Naive thymus-derived CD4-positive, alpha-beta T cell (primary cell): ENCODE measurements at regions of chr16 and their contacts with region 1.

Region 1: GRCh38 chr16:66751303-66751991 is at the start of gene DYNC1LI2:
- DNase-seq: peak; percentile 76 to 95 (median 88)
- ATAC-seq: peak; percentile 98
- H3K4me3 ChIP-seq: peak within 1 kb of the TSS; percentile 78
- H3K4me3 Mint-ChIP-seq: peak within 1 kb of the TSS; percentile 76 to 95 (median 90)
- H3K27ac ChIP-seq: peak within 1 kb of the TSS; percentile 91
- H3K27ac Mint-ChIP-seq: peak within 1 kb of the TSS; percentile 73 to 96 (median 88)
- H3K4me1 ChIP-seq: peaks cover 21 to 24% of the 10 kb centered on the region in 2 donors
- H3K4me1 Mint-ChIP-seq: peaks cover 30 to 45% (median 42%) of the 10 kb centered on the region in 7 donors
- H3K27me3 ChIP-seq: no peaks in the 10 kb centered on the region
- H3K27me3 Mint-ChIP-seq: peaks cover 0 to 35% (median 0%) of the 10 kb centered on the region in 5 donors
- total RNA-seq, gene DYNC1LI2: 72.3 to 85.7 (median 80.9) TPM

Region 2: GRCh38 chr16:66507731-66508239 is 243.7 kb before region 1 on chr16:
- CTCF ChIA-PET with region 1: no interaction called
- POLR2A ChIA-PET with region 1: no interaction called
- intact Hi-C with region 1: no loop called
- DNase-seq: no peak
- ATAC-seq: no peak
- H3K4me3 ChIP-seq: no peak overlapping the region
- H3K4me3 Mint-ChIP-seq: no peak overlapping the region
- H3K27ac ChIP-seq: no peak overlapping the region
- H3K27ac Mint-ChIP-seq: peak overlapping the region in 1 of 9 donors; percentile 72
- H3K4me1 ChIP-seq: no peaks in the 10 kb centered on the region
- H3K4me1 Mint-ChIP-seq: peaks cover 5 to 15% (median 8%) of the 10 kb centered on the region in 7 donors
- H3K27me3 ChIP-seq: no peaks in the 10 kb centered on the region
- H3K27me3 Mint-ChIP-seq: no peaks in the 10 kb centered on the region

Region 3: GRCh38 chr16:66562407-66562806 is 189.0 kb before region 1 on chr16:
- CTCF ChIA-PET with region 1: no interaction called
- POLR2A ChIA-PET with region 1: no interaction called
- intact Hi-C with region 1: loop called in 1 of 2 experiments (anchors 5 kb)
- DNase-seq: peak in 4 of 9 donors; percentile 21 to 53 (median 34)
- ATAC-seq: peak; percentile 60
- H3K4me3 ChIP-seq: no peak overlapping the region
- H3K4me3 Mint-ChIP-seq: no peak overlapping the region
- H3K27ac ChIP-seq: no peak overlapping the region
- H3K27ac Mint-ChIP-seq: peak overlapping the region in 5 of 9 donors; percentile 14 to 71 (median 26)
- H3K4me1 ChIP-seq: peaks cover 22 to 46% of the 10 kb centered on the region in 2 donors
- H3K4me1 Mint-ChIP-seq: peaks cover 31 to 67% (median 41%) of the 10 kb centered on the region in 7 donors
- H3K27me3 ChIP-seq: no peaks in the 10 kb centered on the region
- H3K27me3 Mint-ChIP-seq: no peaks in the 10 kb centered on the region

Region 4: DNA sequence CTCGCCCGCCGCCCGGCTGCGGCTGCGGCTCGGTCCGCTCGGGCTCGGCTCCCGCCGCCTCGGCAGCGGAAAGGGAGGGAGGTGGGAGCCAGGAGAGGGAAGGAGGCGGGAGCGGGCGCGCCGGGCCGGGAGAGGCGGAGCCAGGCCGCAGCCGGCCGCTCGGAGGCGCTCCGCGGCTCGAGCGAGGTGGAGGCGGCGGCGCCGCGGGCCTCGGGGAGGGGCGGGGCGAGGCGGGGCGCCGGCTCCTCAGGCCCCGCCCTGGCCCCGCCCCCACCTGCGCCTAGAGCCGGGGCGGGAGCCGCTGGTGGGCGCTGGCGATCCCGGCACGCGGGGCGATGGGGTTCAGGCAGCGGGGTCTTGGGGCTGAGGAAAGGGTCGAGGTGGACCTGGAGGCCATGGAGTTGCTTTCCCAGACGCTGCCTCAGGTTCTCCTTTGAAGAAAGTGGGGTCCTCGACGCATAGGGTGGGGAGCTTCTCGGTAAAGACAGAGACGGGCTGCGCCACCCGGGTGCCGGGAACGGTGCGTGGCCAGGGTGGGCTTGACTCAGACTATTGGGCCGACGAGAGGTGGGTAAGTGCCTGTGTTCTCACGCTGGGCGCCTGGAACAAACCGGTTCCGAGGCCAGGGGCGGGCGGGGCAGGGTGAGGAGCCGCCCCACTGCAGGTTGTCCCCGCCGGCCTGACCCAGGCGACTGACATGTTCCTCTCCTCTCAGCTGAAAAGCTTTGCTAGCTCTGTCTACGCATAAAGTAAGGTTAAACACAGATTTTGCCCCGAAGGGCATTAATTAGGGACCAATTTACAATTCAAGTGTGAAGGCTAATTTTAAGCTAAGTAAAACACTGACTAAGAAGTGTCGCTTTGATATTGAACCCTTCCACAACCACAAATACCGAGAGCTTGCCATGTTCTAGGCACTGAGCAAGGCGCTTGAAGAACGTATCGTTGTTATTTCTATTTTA is 54.5 kb before region 1 on chr16 and contains the start of gene CMTM4:
- CTCF ChIA-PET with region 1: no interaction called
- POLR2A ChIA-PET with region 1: interaction called, 3 read pairs
- intact Hi-C with region 1: loop called (anchors 1 kb)
- DNase-seq: peak; percentile 56 to 85 (median 72)
- ATAC-seq: peak; percentile 98
- H3K4me3 ChIP-seq: peak within 1 kb of the TSS; percentile 69
- H3K4me3 Mint-ChIP-seq: peak within 1 kb of the TSS; percentile 77 to 91 (median 83)
- H3K27ac ChIP-seq: peak within 1 kb of the TSS; percentile 45
- H3K27ac Mint-ChIP-seq: peak within 1 kb of the TSS in 5 of 9 donors; percentile 36 to 81 (median 47)
- H3K4me1 ChIP-seq: peaks cover 5 to 10% of the 10 kb centered on the region in 2 donors
- H3K4me1 Mint-ChIP-seq: peaks cover 6 to 16% (median 12%) of the 10 kb centered on the region in 7 donors
- H3K27me3 ChIP-seq: no peaks in the 10 kb centered on the region
- H3K27me3 Mint-ChIP-seq: peaks cover 0 to 57% (median 7%) of the 10 kb centered on the region in 5 donors
- total RNA-seq, gene CMTM4: 1.5 to 2.5 (median 1.8) TPM

Region 5: GRCh38 chr16:66830422-66831404 is 79.3 kb after region 1 on chr16 and contains the start of gene NAE1:
- CTCF ChIA-PET with region 1: interaction called, 5 read pairs
- POLR2A ChIA-PET with region 1: interaction called, 13 read pairs
- intact Hi-C with region 1: loop called (anchors 1 to 5 kb)
- DNase-seq: peak; percentile 82 to 97 (median 93)
- ATAC-seq: peak; percentile 99
- H3K4me3 ChIP-seq: peak within 1 kb of the TSS; percentile 84
- H3K4me3 Mint-ChIP-seq: peak within 1 kb of the TSS; percentile 75 to 89 (median 79)
- H3K27ac ChIP-seq: peak within 1 kb of the TSS; percentile 78
- H3K27ac Mint-ChIP-seq: peak within 1 kb of the TSS in 8 of 9 donors; percentile 32 to 86 (median 59)
- H3K4me1 ChIP-seq: peaks cover 19 to 28% of the 10 kb centered on the region in 2 donors
- H3K4me1 Mint-ChIP-seq: peaks cover 15 to 36% (median 34%) of the 10 kb centered on the region in 7 donors
- H3K27me3 ChIP-seq: no peaks in the 10 kb centered on the region
- H3K27me3 Mint-ChIP-seq: no peaks in the 10 kb centered on the region
- total RNA-seq, gene NAE1: 62.3 to 96.6 (median 90.7) TPM

Region 6: GRCh38 chr16:66872943-66873684 is 121.7 kb after region 1 on chr16:
- CTCF ChIA-PET with region 1: interaction called, 3 read pairs
- POLR2A ChIA-PET with region 1: no interaction called
- intact Hi-C with region 1: loop called (anchors 2 to 5 kb)
- DNase-seq: peak; percentile 62 to 93 (median 77)
- ATAC-seq: peak; percentile 95
- H3K4me3 ChIP-seq: peak overlapping the region; percentile 48
- H3K4me3 Mint-ChIP-seq: peak overlapping the region; percentile 77 to 94 (median 82)
- H3K27ac ChIP-seq: peak overlapping the region; percentile 18
- H3K27ac Mint-ChIP-seq: peak overlapping the region; percentile 7 to 93 (median 60)
- H3K4me1 ChIP-seq: peaks cover 5 to 6% of the 10 kb centered on the region in 2 donors
- H3K4me1 Mint-ChIP-seq: peaks cover 7 to 49% (median 14%) of the 10 kb centered on the region in 7 donors
- H3K27me3 ChIP-seq: no peaks in the 10 kb centered on the region
- H3K27me3 Mint-ChIP-seq: no peaks in the 10 kb centered on the region

Region 7: GRCh38 chr16:66934153-66934838 is 182.8 kb after region 1 on chr16 and contains the start of gene CIAO2B:
- CTCF ChIA-PET with region 1: no interaction called
- POLR2A ChIA-PET with region 1: no interaction called
- intact Hi-C with region 1: loop called in 1 of 2 experiments (anchors 5 kb)
- DNase-seq: peak; percentile 86 to 95 (median 91)
- ATAC-seq: peak; percentile 93
- H3K4me3 ChIP-seq: peak within 1 kb of the TSS; percentile 96
- H3K4me3 Mint-ChIP-seq: peak within 1 kb of the TSS; percentile 91 to 99 (median 98)
- H3K27ac ChIP-seq: peak within 1 kb of the TSS; percentile 97
- H3K27ac Mint-ChIP-seq: peak within 1 kb of the TSS; percentile 96 to 99 (median 98)
- H3K4me1 ChIP-seq: peaks cover 24 to 35% of the 10 kb centered on the region in 2 donors
- H3K4me1 Mint-ChIP-seq: peaks cover 38 to 63% (median 54%) of the 10 kb centered on the region in 7 donors
- H3K27me3 ChIP-seq: no peaks in the 10 kb centered on the region
- H3K27me3 Mint-ChIP-seq: no peaks in the 10 kb centered on the region
- total RNA-seq, gene CIAO2B: 47.0 to 116 (median 58.5) TPM

Region 8: DNA sequence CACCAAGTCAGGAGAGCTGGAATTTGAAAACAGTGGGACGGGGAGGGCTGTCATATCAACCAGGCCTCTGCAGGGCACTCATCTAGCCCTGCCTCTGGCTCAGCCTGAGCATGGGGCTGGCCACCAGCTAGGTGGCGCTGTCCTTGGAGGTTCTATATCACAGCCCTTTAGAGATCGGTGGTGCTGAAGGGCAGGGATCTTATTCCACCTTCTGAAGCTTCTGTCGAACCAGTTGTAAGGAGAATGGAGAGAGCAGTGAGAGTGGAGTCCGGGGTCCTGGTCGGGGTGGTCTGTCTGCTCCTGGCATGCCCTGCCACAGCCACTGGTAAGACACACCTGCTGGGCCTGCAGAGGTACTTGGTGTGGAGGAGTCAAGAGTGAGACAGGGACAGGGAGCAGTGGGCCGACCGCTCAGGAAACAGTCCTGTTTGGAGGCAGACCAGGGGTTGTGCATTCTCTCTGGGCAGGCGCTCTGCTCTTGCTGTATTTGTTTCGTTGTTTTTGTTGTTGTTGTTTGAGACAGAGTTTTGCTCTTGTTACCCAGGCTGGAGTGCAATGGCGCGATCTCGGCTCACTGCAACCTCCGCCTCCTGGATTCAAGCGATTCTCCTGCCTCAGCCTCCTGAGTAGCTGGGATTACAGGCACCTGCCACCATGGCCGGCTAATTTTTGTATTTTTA is 209.8 kb after region 1 on chr16 and contains the start of gene CES3:
- CTCF ChIA-PET with region 1: no interaction called
- POLR2A ChIA-PET with region 1: no interaction called
- intact Hi-C with region 1: no loop called
- DNase-seq: peak in 8 of 9 donors; percentile 23 to 71 (median 34)
- ATAC-seq: peak; percentile 90
- H3K4me3 ChIP-seq: no peak within 1 kb of the TSS
- H3K4me3 Mint-ChIP-seq: peak within 1 kb of the TSS in 1 of 10 donors; percentile 92
- H3K27ac ChIP-seq: no peak within 1 kb of the TSS
- H3K27ac Mint-ChIP-seq: peak within 1 kb of the TSS in 2 of 9 donors; percentile 68 to 91
- H3K4me1 ChIP-seq: no peaks in the 10 kb centered on the region
- H3K4me1 Mint-ChIP-seq: peaks cover 10 to 33% (median 17%) of the 10 kb centered on the region in 7 donors
- H3K27me3 ChIP-seq: no peaks in the 10 kb centered on the region
- H3K27me3 Mint-ChIP-seq: peaks cover 0 to 5% (median 0%) of the 10 kb centered on the region in 5 donors
- total RNA-seq, gene CES3: 0.32 to 11.5 (median 0.77) TPM in 4 of 5 experiments, not detected in the other